ENCODE measurements at regions of chr6 and their contacts with region 1.

Region 1: GRCh38 chr6:26003102-26003694 is 40.6 kb downstream of the TRIM38 start:
- DNase-seq: no peak
- H3K4me3 ChIP-seq: no peak overlapping the region
- H3K27me3 ChIP-seq: no peaks in the 10 kb centered on the region
- CTCF ChIP-seq: peak; percentile 87

Region 2: GRCh38 chr6:25788305-25788922 is 214.8 kb before region 1 on chr6:
- CTCF ChIA-PET with region 1: interaction called, 25 read pairs
- POLR2A ChIA-PET with region 1: no interaction called
- DNase-seq: peak; percentile 1
- H3K4me3 ChIP-seq: no peak overlapping the region
- H3K27me3 ChIP-seq: no peaks in the 10 kb centered on the region
- CTCF ChIP-seq: peak; percentile 68

Region 3: DNA sequence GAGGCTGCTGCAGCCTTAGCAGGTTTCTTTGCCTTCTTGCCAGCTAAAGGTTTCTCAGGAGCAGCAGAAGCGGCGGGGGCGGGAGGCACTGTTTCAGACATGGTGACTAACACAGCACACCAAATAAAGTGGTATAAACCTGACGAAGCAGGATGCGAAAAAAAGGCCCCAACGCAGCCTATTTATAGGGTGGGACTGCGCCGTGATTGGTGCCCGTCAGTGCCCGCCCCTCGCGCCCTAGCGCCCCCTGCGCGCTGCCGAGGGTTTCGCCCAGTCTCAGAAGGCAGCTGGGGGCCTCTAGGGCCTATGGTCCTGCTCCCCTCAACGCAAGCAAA is 14.4 kb after region 1 on chr6:
- CTCF ChIA-PET with region 1: interaction called, 83 read pairs
- POLR2A ChIA-PET with region 1: no interaction called
- DNase-seq: no peak
- H3K4me3 ChIP-seq: peak overlapping the region; percentile 26
- H3K27me3 ChIP-seq: no peaks in the 10 kb centered on the region
- CTCF ChIP-seq: peak; percentile 79

Region 4: DNA sequence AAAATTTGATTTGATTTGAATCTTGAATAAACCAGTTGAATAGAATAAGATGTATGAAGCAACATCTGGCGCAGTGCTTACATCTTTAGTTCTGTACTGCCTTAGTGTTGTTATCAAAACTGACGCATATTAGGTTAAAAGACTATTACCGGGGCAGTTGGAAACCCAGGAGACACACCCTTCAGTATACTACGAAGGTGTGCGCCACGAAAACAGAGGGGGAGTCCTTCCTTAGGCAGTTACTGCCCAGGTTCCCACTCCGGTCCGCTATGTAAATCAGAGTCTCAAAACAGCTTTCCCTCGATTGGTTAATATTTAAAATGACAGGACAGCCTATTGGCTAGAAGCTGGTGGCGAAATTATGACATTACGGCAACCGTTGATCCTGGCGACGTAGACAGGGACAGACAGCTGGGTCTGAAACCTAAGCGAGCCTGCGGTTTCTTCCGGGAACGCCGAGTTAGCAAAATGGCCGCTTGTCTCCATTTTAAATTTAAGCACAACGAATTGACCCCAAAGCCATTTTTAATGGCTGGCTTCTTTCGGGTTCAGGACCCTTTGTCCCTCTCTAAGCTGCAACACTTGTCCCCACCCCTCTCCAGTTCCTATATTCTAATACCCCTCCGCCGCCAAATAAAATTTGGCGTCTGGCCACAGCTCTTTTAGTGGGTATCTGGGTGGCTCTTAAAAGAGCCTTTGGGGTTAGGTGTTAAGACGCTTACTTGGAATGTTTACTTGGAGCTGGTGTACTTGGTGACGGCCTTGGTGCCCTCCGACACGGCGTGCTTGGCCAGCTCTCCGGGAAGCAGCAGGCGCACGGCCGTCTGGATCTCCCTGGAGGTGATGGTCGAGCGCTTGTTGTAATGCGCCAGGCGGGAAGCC is 119.8 kb after region 1 on chr6:
- CTCF ChIA-PET with region 1: no interaction called
- POLR2A ChIA-PET with region 1: no interaction called
- DNase-seq: peak; percentile 98
- H3K4me3 ChIP-seq: peak overlapping the region; percentile 59
- H3K27me3 ChIP-seq: no peaks in the 10 kb centered on the region
- CTCF ChIP-seq: no peak